ENCODE measurements at regions of chr12 and their contacts with region 1.

Region 1: DNA sequence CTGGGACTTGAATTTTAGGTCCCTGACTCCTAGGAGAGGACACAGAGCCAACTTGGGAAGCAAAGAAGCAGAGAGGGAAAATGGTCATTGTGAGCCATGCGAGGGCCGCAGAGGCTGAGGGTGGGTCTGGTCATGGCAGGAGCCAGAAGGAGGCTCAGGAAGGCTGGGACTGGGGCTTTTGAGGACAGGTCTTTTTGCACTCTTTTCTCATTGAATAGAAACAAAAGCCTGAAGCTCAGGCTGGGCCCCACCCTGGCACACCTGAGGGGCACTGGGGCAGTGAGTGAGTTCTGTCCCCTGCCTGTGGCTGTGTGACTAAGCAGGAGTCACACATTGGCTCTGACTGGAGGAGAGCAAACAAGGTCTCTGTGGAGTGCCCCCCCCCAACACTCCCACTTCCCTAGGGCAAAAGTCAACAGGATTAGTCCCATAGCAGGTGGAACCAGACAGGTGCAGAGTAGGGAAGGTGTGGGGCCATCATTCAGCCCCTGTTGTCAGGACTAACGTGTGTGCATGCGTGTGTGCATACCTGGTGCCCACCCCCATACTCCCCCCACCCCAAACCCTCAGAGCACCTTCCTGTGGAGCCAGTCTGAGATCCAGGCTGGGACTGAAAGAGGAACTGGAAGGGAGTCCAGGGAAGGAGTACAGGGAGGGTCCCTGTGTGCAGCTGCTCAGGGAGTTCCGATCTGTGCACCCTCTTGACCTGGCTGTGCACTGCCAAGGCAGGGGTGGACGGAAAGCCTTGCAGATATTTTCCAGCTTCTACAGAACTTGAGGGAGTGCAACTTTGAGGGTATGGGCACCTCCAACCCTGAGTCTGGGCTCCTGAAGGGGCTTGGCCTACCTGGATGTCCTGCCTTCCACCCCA is 3.0 kb downstream of the KRT7 start:
- DNase-seq: no peak
- H3K4me3 ChIP-seq: no peak overlapping the region
- H3K27ac ChIP-seq: no peak overlapping the region
- H3K4me1 ChIP-seq: peaks cover 14 to 40% (median 25%) of the 10 kb centered on the region in 4 experiments
- H3K27me3 ChIP-seq: peaks cover 0 to 43% (median 21%) of the 10 kb centered on the region in 4 experiments; a peak in 6 of 7 replicates
- CTCF ChIP-seq: no peak
- EP300 ChIP-seq: no peak
- POLR2A ChIP-seq: no peak
- RAD21 ChIP-seq: no peak

Region 2: GRCh38 chr12:52147367-52147972 is 88.6 kb before region 1 on chr12:
- CTCF ChIA-PET with region 1: interaction called, 14 read pairs
- POLR2A ChIA-PET with region 1: no interaction called
- DNase-seq: no peak
- H3K4me3 ChIP-seq: no peak overlapping the region
- H3K27ac ChIP-seq: peak overlapping the region; percentile 73
- H3K4me1 ChIP-seq: peaks cover 8 to 44% (median 19%) of the 10 kb centered on the region in 4 experiments
- H3K27me3 ChIP-seq: no peaks in the 10 kb centered on the region; a peak in 1 of 7 replicates
- CTCF ChIP-seq: no peak
- EP300 ChIP-seq: no peak
- POLR2A ChIP-seq: no peak
- RAD21 ChIP-seq: no peak

Region 3: GRCh38 chr12:52207895-52208294 is 28.2 kb before region 1 on chr12:
- CTCF ChIA-PET with region 1: interaction called, 25 read pairs
- POLR2A ChIA-PET with region 1: interaction called, 3 read pairs
- DNase-seq: no peak
- H3K4me3 ChIP-seq: no peak overlapping the region
- H3K27ac ChIP-seq: no peak overlapping the region
- H3K4me1 ChIP-seq: peaks cover 0 to 7% (median 2%) of the 10 kb centered on the region in 4 experiments; a peak in 3 of 7 replicates
- H3K27me3 ChIP-seq: no peaks in the 10 kb centered on the region
- CTCF ChIP-seq: no peak
- EP300 ChIP-seq: no peak
- POLR2A ChIP-seq: no peak
- RAD21 ChIP-seq: no peak

Region 4: GRCh38 chr12:52285172-52285745 is 49.2 kb after region 1 on chr12:
- CTCF ChIA-PET with region 1: interaction called, 34 read pairs
- POLR2A ChIA-PET with region 1: no interaction called
- DNase-seq: no peak
- H3K4me3 ChIP-seq: no peak overlapping the region
- H3K27ac ChIP-seq: no peak overlapping the region
- H3K4me1 ChIP-seq: peaks cover 0 to 2% (median 0%) of the 10 kb centered on the region in 4 experiments; a peak in 1 of 7 replicates
- H3K27me3 ChIP-seq: no peaks in the 10 kb centered on the region
- CTCF ChIP-seq: no peak
- EP300 ChIP-seq: no peak
- POLR2A ChIP-seq: no peak
- RAD21 ChIP-seq: no peak

Region 5: DNA sequence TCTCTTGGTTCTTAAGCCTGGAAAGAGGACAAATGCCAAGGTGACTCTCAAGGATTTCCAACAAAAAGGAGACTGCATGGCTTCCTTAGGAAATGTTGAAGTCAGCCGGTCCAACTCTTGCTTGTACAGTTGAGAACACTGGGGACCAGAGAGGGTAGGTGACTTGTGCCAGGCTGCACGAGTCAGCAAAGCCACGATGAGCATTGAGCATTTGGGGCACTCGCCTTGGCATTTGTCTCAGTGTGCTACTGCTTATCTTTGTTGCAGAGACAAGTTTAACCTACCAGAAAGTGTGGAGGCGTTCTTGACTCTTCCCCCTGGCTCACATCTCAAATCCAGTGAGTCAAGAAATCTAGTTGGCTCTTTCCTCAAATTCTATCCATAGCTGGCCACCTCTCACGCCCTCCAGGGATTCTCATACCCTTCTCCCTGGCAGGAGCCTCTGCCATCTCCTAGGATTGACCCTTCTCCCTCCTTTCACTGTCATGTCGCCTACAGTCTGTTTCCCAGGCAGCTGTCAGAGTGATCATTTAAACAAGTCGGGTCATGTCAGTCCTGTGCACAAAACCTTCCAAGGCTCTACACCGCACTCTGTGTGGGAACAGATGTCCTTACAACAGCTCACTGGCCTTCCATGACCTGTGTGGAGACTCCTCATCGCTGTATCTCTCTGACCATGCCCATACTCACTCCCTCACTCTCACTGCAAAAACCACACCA is 102.3 kb after region 1 on chr12:
- CTCF ChIA-PET with region 1: no interaction called
- POLR2A ChIA-PET with region 1: no interaction called
- DNase-seq: no peak
- H3K4me3 ChIP-seq: no peak overlapping the region
- H3K27ac ChIP-seq: no peak overlapping the region
- H3K4me1 ChIP-seq: peaks cover 0 to 3% (median 0%) of the 10 kb centered on the region in 4 experiments; a peak in 1 of 7 replicates
- H3K27me3 ChIP-seq: no peaks in the 10 kb centered on the region
- CTCF ChIP-seq: no peak
- EP300 ChIP-seq: no peak
- POLR2A ChIP-seq: no peak
- RAD21 ChIP-seq: no peak